Activated CD4-positive, alpha-beta T cell treated with anti-CD3 and anti-CD28 coated beads, Interleukin-2, amount 10 ng/mL, durations not matched to agents 24 days and 14 days (primary cell): ENCODE measurements at regions of chr6 and their contacts with region 1.

Region 1: DNA sequence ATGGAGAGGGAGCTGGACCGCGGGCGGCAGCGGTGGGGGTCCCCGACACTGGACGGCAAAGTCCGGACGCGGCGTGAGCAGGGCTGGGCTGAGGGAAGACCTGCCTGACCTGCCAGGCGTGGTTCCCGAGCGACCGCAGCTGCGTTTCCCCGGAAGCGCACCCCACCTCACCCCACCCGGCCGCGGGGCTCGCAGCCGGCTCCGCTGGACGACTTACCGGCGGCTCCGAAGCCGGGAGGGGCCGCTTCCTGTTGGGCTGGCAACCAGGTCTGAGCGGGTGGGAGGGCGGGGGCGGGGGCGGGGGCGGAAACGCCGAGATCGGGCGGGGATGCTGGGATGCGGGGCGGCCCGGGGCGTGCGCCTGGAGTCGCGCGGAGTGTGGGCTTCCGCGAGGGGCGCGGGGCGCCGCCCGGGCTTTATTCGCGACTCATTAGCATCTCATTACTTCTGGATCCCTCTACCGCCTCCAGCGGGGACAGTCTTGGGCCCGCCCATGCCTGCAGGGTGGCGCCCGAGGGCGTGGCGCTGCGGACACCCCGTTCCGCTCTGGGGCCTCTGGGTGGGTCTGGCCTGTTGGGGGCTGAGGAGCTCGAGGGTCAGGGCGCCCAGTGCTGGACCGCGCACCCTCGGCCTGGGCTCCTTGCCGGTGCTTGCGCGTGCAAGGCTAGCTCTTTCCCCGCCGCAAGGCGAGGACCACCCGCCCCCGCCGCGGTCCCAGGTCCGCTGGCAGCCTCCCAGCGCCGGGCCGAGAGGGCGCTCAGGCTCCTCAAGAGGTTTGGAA is at the start of gene MICAL1:
- DNase-seq: peak; percentile 93
- H3K4me3 Mint-ChIP-seq: peak within 1 kb of the TSS; percentile 98
- H3K27ac Mint-ChIP-seq: peak within 1 kb of the TSS; percentile 95
- H3K4me1 Mint-ChIP-seq: peaks cover 61% of the 10 kb centered on the region
- H3K27me3 Mint-ChIP-seq: no peaks in the 10 kb centered on the region
- total RNA-seq, gene MICAL1: 41.4 and 42.5 TPM in 2 replicates

Region 2: GRCh38 chr6:109095027-109095834 is 360.5 kb before region 1 on chr6 and contains the start of gene CEP57L1:
- intact Hi-C with region 1: loop called (anchors 5 kb)
- DNase-seq: peak; percentile 98
- H3K4me3 Mint-ChIP-seq: peak within 1 kb of the TSS; percentile 90
- H3K27ac Mint-ChIP-seq: peak within 1 kb of the TSS; percentile 100
- H3K4me1 Mint-ChIP-seq: peaks cover 53% of the 10 kb centered on the region
- H3K27me3 Mint-ChIP-seq: no peaks in the 10 kb centered on the region
- total RNA-seq, gene CEP57L1: 14.2 and 15.3 TPM in 2 replicates

Region 3: DNA sequence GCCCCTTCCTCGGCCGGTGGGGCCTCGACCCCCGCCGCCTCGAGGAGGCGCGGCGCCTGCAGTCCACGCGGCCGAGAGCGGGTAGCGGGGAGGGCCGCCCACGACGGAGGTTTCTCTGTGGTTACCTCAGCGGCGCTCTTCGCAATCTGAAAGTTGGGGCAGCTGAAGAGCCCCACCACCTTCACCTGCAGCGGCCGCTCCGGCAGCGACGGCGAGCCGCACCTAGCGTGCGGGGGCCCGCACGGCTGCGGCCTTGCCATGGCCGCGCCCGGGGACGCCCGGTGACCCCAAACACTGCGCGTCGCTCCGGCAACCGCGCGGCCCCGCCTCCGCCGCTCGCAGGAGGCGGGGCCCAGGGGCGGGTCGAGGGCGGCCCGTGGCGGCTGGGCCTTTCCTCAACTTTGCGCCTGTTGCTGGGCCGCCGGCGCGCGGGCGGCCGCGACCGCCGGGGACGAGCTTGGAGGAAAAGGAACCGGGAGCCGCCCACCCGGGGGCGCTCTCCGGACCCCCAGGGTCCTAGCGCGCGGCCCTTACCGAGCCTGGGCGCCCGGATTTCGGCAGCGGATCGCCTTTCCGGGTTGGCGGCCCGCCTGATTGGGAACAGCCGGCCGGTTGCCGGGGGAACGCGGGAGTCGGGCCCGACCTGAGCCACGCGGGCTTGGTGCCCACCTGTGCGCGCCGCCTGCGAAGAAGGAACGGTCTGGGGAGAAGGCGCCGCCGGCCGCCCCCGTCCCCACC is 15.2 kb before region 1 on chr6 and contains the starts of genes PPIL6 and SMPD2:
- intact Hi-C with region 1: loop called (anchors 1 kb)
- DNase-seq: peak; percentile 95
- H3K4me3 Mint-ChIP-seq: peak within 1 kb of the TSS; percentile 97
- H3K27ac Mint-ChIP-seq: peak within 1 kb of the TSS; percentile 96
- H3K4me1 Mint-ChIP-seq: peaks cover 27% of the 10 kb centered on the region
- H3K27me3 Mint-ChIP-seq: peaks cover 2% of the 10 kb centered on the region
- total RNA-seq, gene PPIL6: not detected in 2 replicates
- total RNA-seq, gene SMPD2: 18.2 and 20.5 TPM in 2 replicates

Region 4: GRCh38 chr6:109477725-109478124 is 22.0 kb after region 1 on chr6:
- intact Hi-C with region 1: loop called (anchors 1 kb)
- DNase-seq: peak; percentile 61
- H3K4me3 Mint-ChIP-seq: peak overlapping the region; percentile 97
- H3K27ac Mint-ChIP-seq: peak overlapping the region; percentile 88
- H3K4me1 Mint-ChIP-seq: peaks cover 66% of the 10 kb centered on the region
- H3K27me3 Mint-ChIP-seq: no peaks in the 10 kb centered on the region

Region 5: DNA sequence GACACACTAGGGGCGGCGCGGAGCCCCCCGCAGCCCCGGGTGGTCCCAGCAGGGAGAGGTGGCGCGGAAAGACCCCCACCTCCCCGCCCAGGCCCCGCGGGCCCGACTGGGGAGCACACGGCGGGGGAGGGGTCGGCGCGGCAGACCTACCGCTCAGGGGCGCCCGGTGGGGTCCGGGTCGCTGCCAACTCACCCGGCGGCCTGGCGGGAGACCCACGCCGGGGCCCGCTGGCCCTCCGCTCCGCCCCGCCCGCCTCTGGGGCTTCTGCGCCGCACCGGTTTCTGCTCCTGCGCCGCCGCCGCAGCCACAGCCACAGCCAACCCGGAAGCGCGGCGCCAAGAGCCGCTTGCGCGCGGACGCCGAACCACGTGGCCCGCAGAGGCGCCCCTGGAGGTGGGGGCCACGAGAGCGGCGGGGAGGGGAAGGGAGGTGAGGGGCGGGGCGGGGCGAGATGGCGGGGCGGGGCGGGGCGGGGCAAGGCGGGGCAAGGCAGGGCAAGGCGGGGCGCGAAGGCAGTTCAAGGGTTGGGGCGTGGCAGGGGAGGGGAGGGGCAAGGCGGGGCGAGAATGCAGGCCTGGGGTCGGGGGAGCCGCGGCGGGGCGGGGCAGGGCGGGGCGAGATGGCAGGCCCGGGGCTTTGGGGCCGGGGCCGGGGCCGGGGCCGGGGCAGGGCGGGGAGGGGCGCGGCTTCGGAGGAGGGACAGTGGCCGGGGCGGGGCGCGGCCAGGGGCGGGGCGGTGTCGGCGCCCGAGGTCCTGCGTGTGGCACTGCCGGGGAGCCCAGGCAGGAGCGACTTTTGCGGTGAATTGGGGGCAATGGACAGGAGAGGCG is 27.4 kb after region 1 on chr6 and contains the start of gene ZBTB24:
- intact Hi-C with region 1: loop called (anchors 1 kb)
- DNase-seq: peak; percentile 97
- H3K4me3 Mint-ChIP-seq: peak within 1 kb of the TSS; percentile 97
- H3K27ac Mint-ChIP-seq: peak within 1 kb of the TSS; percentile 93
- H3K4me1 Mint-ChIP-seq: peaks cover 41% of the 10 kb centered on the region
- H3K27me3 Mint-ChIP-seq: peaks cover 3% of the 10 kb centered on the region
- total RNA-seq, gene ZBTB24: 18.9 and 19.6 TPM in 2 replicates

Region 6: GRCh38 chr6:109503327-109504224 is 47.9 kb after region 1 on chr6:
- intact Hi-C with region 1: no loop called
- DNase-seq: peak; percentile 42
- H3K4me3 Mint-ChIP-seq: no peak overlapping the region
- H3K27ac Mint-ChIP-seq: no peak overlapping the region
- H3K4me1 Mint-ChIP-seq: no peaks in the 10 kb centered on the region
- H3K27me3 Mint-ChIP-seq: peaks cover 20% of the 10 kb centered on the region

Region 7: GRCh38 chr6:109718991-109719390 is 263.3 kb after region 1 on chr6:
- intact Hi-C with region 1: no loop called
- DNase-seq: no peak
- H3K4me3 Mint-ChIP-seq: no peak overlapping the region
- H3K27ac Mint-ChIP-seq: no peak overlapping the region
- H3K4me1 Mint-ChIP-seq: no peaks in the 10 kb centered on the region
- H3K27me3 Mint-ChIP-seq: no peaks in the 10 kb centered on the region

Region 8: GRCh38 chr6:110415086-110415916 is 959.6 kb after region 1 on chr6 and contains the start of gene DDO:
- intact Hi-C with region 1: no loop called
- DNase-seq: no peak
- H3K4me3 Mint-ChIP-seq: peak within 1 kb of the TSS; percentile 52
- H3K27ac Mint-ChIP-seq: no peak within 1 kb of the TSS
- H3K4me1 Mint-ChIP-seq: peaks cover 6% of the 10 kb centered on the region
- H3K27me3 Mint-ChIP-seq: peaks cover 2% of the 10 kb centered on the region
- total RNA-seq, gene DDO: not detected in 2 replicates